ENCODE measurements at regions of chr7 and their contacts with region 1.

Region 1: DNA sequence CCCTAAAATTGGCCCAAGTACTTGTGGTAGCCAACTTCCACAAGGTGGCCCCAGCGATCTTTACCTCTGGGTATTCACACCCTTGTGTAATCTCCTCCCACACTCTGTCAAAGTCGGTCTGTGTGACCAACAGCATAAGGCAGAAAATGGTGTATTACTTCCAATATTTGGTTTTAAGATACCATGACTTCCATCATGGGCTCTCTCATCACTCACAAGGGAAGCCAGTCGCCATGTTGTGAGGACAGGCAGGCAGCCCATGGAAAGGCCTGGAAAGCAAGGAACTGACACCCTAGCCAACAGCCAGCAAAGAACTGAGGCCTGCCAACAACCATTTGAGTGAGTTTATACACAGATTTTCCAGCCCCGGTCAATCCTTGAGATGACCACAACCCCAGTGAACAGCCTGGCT is 91.0 kb upstream of the KMT2E start:
- DNase-seq: peak; percentile 54 to 88 (median 72)
- ATAC-seq: peak; percentile 96
- H3K4me3 ChIP-seq: no peak overlapping the region
- H3K4me3 Mint-ChIP-seq: no peak overlapping the region
- H3K27ac ChIP-seq: no peak overlapping the region
- H3K27ac Mint-ChIP-seq: peak overlapping the region; percentile 55
- H3K4me1 ChIP-seq: no peaks in the 10 kb centered on the region
- H3K4me1 Mint-ChIP-seq: peaks cover 5% of the 10 kb centered on the region
- H3K27me3 ChIP-seq: no peaks in the 10 kb centered on the region
- H3K27me3 Mint-ChIP-seq: no peaks in the 10 kb centered on the region
- CTCF ChIP-seq: peak; percentile 66

Region 2: DNA sequence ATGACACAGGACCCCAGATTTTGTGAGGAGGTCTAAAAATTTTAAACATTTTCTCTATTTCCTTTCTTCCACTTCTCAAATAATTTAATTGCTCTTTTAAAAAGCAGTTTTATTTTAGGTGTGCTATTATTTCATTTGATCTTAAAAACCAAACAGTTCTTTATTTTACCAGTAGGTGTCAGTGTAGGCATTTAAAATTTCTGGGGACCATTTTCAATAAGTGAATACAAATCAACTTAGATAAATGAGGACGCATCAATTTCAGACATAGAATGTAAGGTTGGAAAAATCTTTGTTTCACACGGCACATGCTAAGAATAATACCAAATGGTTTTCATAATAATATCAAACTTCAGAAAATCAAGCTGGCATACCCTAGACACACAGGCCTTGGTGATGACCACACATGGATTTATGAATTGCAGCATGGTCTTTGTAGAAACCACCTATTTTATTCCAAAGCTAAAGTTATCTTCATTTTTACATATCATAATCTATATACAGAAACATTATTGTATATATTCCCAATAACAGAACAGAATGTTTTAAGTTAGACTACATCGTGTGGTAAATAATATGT is 1349.4 kb before region 1 on chr7:
- CTCF ChIA-PET with region 1: interaction called, 11 read pairs
- POLR2A ChIA-PET with region 1: no interaction called
- intact Hi-C with region 1: loop called in 1 of 2 experiments (anchors 1 kb)
- DNase-seq: peak in 2 of 9 experiments; percentile 33 to 47
- ATAC-seq: no peak
- H3K4me3 ChIP-seq: no peak overlapping the region
- H3K4me3 Mint-ChIP-seq: no peak overlapping the region
- H3K27ac ChIP-seq: no peak overlapping the region
- H3K27ac Mint-ChIP-seq: no peak overlapping the region
- H3K4me1 ChIP-seq: no peaks in the 10 kb centered on the region
- H3K4me1 Mint-ChIP-seq: no peaks in the 10 kb centered on the region
- H3K27me3 ChIP-seq: no peaks in the 10 kb centered on the region
- H3K27me3 Mint-ChIP-seq: peaks cover 8% of the 10 kb centered on the region
- CTCF ChIP-seq: peak; percentile 78

Region 3: GRCh38 chr7:104878577-104878976 is 44.4 kb before region 1 on chr7:
- CTCF ChIA-PET with region 1: interaction called, 166 read pairs
- POLR2A ChIA-PET with region 1: interaction called, 3 read pairs
- intact Hi-C with region 1: loop called (anchors 1 kb)
- DNase-seq: no peak
- ATAC-seq: no peak
- H3K4me3 ChIP-seq: no peak overlapping the region
- H3K4me3 Mint-ChIP-seq: no peak overlapping the region
- H3K27ac ChIP-seq: no peak overlapping the region
- H3K27ac Mint-ChIP-seq: no peak overlapping the region
- H3K4me1 ChIP-seq: no peaks in the 10 kb centered on the region
- H3K4me1 Mint-ChIP-seq: peaks cover 5% of the 10 kb centered on the region
- H3K27me3 ChIP-seq: no peaks in the 10 kb centered on the region
- H3K27me3 Mint-ChIP-seq: peaks cover 3% of the 10 kb centered on the region
- CTCF ChIP-seq: no peak

Region 4: GRCh38 chr7:104943502-104944343 is 20.7 kb after region 1 on chr7:
- CTCF ChIA-PET with region 1: interaction called, 7 read pairs
- POLR2A ChIA-PET with region 1: interaction called, 5 read pairs
- intact Hi-C with region 1: loop called (anchors 1 kb)
- DNase-seq: peak; percentile 40 to 86 (median 69)
- ATAC-seq: peak; percentile 24
- H3K4me3 ChIP-seq: peak overlapping the region; percentile 10 to 18
- H3K4me3 Mint-ChIP-seq: peak overlapping the region; percentile 83
- H3K27ac ChIP-seq: peak overlapping the region; percentile 98
- H3K27ac Mint-ChIP-seq: peak overlapping the region; percentile 100
- H3K4me1 ChIP-seq: peaks cover 52% of the 10 kb centered on the region
- H3K4me1 Mint-ChIP-seq: peaks cover 64% of the 10 kb centered on the region
- H3K27me3 ChIP-seq: no peaks in the 10 kb centered on the region
- H3K27me3 Mint-ChIP-seq: no peaks in the 10 kb centered on the region
- CTCF ChIP-seq: no peak

Region 5: DNA sequence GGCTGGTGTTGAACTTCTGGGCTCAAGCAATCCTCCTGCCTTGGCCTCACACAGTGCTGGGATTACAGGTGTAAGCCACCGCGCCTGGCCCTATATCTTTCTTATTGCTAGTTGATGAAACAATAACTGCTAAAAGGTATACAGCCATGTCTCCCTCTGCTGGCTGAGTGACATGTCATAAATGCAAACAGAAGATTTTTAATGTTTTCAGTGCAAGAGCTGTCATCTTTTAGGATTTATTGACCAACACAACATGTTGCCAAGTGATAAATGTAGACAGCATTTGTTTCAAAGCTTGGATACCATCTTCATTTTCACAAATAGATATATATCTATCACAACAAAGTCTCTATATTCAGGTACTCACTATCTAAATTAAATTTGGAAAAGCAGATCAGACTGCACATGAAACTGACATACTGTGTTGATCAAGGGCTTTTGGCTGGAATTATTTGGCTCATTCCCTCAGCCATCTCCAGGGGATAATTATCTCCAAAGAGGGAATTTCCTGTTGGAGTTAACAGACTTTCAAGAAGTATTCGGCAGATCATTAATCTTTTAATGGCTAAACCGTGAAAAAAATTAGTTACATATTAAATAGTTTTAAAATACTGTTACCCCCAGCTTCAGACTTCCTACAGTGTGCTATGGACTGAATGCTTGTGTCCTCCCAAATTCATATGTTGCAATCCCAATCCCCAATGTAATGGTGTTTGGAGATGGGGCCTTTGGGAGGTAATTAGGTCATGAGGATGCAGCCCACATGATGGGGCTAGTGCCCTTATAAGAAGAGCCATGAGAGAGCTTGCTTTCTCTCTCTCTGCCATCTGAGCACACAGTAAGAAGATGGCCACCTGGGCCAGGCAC is 507.0 kb after region 1 on chr7:
- CTCF ChIA-PET with region 1: interaction called, 3 read pairs
- POLR2A ChIA-PET with region 1: no interaction called
- intact Hi-C with region 1: loop called in 1 of 2 experiments (anchors 2 kb)
- DNase-seq: peak; percentile 12 to 75 (median 53)
- ATAC-seq: peak; percentile 61
- H3K4me3 ChIP-seq: no peak overlapping the region
- H3K4me3 Mint-ChIP-seq: no peak overlapping the region
- H3K27ac ChIP-seq: no peak overlapping the region
- H3K27ac Mint-ChIP-seq: no peak overlapping the region
- H3K4me1 ChIP-seq: no peaks in the 10 kb centered on the region
- H3K4me1 Mint-ChIP-seq: no peaks in the 10 kb centered on the region
- H3K27me3 ChIP-seq: no peaks in the 10 kb centered on the region
- H3K27me3 Mint-ChIP-seq: no peaks in the 10 kb centered on the region
- CTCF ChIP-seq: peak; percentile 45

Measured in CD8-positive, alpha-beta T cell (primary cell).